ENCODE measurements at regions of chr4 and their contacts with region 1.

Region 1: GRCh38 chr4:53055274-53055673 is 193.2 kb downstream of the RASL11B start:
- DNase-seq: no peak
- ATAC-seq: peak in 2 of 8 donors; percentile 10 to 19
- H3K4me3 ChIP-seq: no peak overlapping the region
- H3K27ac ChIP-seq: no peak overlapping the region
- H3K4me1 ChIP-seq: peaks cover 0 to 29% (median 6%) of the 10 kb centered on the region in 9 donors
- H3K27me3 ChIP-seq: no peaks in the 10 kb centered on the region
- CTCF ChIP-seq: no peak

Region 2: DNA sequence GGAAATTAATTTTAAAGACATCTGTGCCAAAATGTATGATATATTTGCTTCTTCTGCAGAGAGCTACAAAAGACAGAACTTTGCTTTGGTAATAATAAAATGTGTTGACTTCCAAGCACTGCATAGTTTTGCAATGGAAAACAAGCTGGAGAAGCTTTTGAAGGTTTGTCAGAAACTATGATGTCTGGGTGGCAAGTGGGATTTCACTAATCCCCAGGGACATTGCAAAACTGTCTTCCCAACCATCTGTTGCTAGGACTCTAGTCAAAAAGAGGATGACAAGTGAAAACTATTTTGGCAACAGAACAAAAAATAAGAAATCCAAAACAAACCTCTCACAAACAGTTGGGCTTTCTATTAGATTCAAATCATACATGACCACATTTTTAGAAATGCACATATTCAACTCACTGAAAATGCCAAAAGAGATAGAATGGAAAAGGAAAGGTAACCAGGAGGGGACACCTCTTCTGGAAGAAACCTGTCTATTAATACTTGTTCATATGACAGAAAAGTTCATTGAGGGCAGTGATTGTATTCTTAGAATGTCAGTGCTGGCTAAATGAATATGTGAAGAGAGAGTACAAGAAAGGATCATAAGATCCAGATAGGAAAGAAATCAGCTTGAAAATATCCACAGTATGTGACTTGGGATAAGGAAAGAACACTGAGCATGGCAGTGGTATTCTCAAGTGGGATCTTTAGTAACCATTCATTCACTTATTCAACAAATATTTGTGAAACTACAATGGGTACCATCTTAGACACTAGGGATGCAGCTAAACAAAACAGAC is 34.9 kb after region 1 on chr4:
- intact Hi-C with region 1: no loop called
- DNase-seq: no peak
- ATAC-seq: peak in 6 of 8 donors; percentile 29 to 51 (median 44)
- H3K4me3 ChIP-seq: no peak overlapping the region
- H3K27ac ChIP-seq: peak overlapping the region in 1 of 10 donors; percentile 11
- H3K4me1 ChIP-seq: peaks cover 0 to 30% (median 8%) of the 10 kb centered on the region in 9 donors
- H3K27me3 ChIP-seq: no peaks in the 10 kb centered on the region
- CTCF ChIP-seq: no peak

Region 3: GRCh38 chr4:53150631-53151488 is 95.6 kb after region 1 on chr4:
- intact Hi-C with region 1: loop called in 1 of 10 experiments (anchors 10 kb)
- DNase-seq: no peak
- ATAC-seq: no peak
- H3K4me3 ChIP-seq: no peak overlapping the region
- H3K27ac ChIP-seq: no peak overlapping the region
- H3K4me1 ChIP-seq: peaks cover 0 to 11% (median 0%) of the 10 kb centered on the region in 9 donors
- H3K27me3 ChIP-seq: no peaks in the 10 kb centered on the region
- CTCF ChIP-seq: no peak

Region 4: DNA sequence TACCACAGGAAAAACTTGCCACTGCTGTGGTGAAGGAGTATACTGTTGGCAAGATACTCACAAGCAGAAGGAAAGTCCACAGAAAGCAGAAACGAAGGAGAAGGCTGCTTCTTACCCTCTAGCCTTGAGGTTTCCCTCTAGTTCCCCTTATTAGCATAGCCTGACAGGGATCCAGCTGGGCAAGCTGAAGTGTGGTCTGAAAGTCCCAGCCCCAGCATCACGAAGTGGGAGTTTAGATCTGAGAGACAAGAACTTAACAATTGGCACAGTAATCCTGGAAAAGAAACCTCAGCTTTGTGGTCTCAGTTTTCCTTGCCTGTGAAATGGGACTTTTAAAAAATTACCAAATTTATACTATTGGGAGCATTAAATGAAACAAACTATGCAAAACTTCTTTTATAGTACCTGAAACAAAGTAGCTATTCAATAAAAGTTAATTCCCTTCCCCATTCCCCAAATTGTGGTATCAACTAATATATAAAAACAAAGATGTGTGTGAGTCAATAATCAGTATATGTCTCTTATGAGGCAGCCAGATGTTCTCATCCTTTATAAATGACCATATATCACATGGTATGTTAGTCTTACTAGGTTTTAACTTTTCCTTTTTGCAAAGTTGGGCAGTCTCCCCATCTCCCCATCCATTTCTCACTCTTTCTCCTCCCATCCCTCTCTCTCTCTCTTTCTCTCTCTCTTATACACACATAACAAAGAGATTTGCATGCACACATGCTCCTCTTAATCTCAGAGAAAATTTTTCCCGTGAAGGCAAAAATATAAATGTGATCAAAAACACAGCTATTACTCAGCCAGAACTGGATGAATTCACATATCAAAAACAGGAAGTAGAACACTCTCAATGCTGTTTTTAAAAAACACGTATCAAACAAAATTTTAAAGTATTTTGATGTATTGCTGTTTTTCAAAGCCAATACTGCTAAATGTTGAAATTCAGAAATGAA is 252.8 kb after region 1 on chr4:
- intact Hi-C with region 1: no loop called
- DNase-seq: no peak
- ATAC-seq: no peak
- H3K4me3 ChIP-seq: no peak overlapping the region
- H3K27ac ChIP-seq: peak overlapping the region in 1 of 10 donors; percentile 37
- H3K4me1 ChIP-seq: peaks cover 0 to 4% (median 0%) of the 10 kb centered on the region in 9 donors
- H3K27me3 ChIP-seq: no peaks in the 10 kb centered on the region
- CTCF ChIP-seq: no peak

Region 5: GRCh38 chr4:53861856-53862610 is 806.8 kb after region 1 on chr4:
- intact Hi-C with region 1: loop called in 1 of 10 experiments (anchors 5 kb)
- DNase-seq: peak in 1 of 2 donors; percentile 45
- ATAC-seq: peak in 7 of 8 donors; percentile 53 to 87 (median 65)
- H3K4me3 ChIP-seq: no peak overlapping the region
- H3K27ac ChIP-seq: peak overlapping the region in 9 of 10 donors; percentile 26 to 77 (median 67)
- H3K4me1 ChIP-seq: peaks cover 2 to 42% (median 32%) of the 10 kb centered on the region in 9 donors
- H3K27me3 ChIP-seq: no peaks in the 10 kb centered on the region
- CTCF ChIP-seq: no peak

Measured in heart right ventricle (tissue), 16 donors.